Activated T-helper 1 cell treated with anti-CD3 and anti-CD28 coated beads, Interleukin-12 subunit alpha, Interleukin-12 subunit beta, Interleukin-2, Interleukin-4 antibody, amounts not matched to agents 30 ng/mL and 10 ng/mL and 1 ng/mL, durations not matched to agents 14 hours and 24 hours and 36 hours (primary cell): ENCODE measurements at regions of chr5 and their contacts with region 1.

Region 1: DNA sequence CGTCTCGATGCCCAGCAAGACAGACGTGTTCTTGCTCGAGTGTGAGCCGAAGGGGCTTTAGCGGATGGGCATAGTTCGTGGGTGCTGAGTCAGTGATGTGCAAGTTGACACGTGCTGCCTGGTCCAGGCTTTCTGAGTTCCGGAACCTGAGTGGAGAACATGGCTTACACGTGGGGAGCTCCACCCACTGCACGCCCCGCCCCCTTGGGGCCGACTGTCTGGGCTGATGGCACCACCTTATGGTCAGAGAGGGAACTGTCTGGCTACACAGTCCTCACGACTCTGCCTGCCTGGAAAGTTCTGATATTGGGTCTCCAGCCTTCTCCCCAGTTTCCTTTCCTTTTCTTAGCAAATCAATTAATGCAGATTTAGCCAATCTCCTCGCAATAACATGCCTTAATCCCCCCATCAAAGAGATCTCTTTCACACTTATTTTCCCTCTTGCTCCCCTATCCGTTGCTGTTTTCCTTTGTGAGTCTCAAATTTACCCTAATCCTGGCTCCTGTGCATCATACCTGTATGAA is 3.8 kb upstream of the STC2 start:
- DNase-seq: peak; percentile 86
- H3K4me3 Mint-ChIP-seq: peak overlapping the region; percentile 56
- H3K27ac Mint-ChIP-seq: peak overlapping the region; percentile 79
- H3K4me1 Mint-ChIP-seq: peaks cover 35% of the 10 kb centered on the region
- H3K27me3 Mint-ChIP-seq: peaks cover 11% of the 10 kb centered on the region

Region 2: DNA sequence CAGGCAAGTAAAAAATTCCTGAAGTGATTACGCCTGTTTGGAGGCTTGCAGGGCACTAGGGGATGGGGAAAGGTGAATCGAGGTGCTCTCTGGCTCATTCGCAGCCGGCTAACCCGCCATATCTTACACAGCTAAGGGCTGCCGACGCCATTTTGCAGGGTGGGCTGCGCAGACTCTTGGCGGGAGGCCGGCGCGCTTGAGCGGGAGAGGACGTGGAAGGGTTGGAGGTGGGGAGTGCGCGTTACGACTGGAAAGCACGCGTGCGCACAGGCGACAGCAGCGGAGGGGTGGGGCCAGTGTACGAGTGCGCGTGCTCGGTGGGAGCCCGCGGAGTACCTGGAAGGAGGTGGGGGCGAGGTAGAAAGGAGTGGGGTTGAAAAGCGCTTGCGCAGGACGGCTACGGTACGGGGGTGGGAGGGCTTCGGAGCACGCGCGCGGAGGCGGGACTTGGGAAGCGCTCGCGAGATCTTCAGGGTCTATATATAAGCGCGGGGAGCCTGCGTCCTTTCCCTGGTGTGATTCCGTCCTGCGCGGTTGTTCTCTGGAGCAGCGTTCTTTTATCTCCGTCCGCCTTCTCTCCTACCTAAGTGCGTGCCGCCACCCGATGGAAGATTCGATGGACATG is 1944.6 kb before region 1 on chr5 and contains the start of gene NPM1:
- intact Hi-C with region 1: loop called (anchors 5 kb)
- DNase-seq: peak; percentile 97
- H3K4me3 Mint-ChIP-seq: peak within 1 kb of the TSS; percentile 97
- H3K27ac Mint-ChIP-seq: peak within 1 kb of the TSS; percentile 98
- H3K4me1 Mint-ChIP-seq: peaks cover 43% of the 10 kb centered on the region
- H3K27me3 Mint-ChIP-seq: peaks cover 8% of the 10 kb centered on the region
- total RNA-seq, gene NPM1: 2,729 and 2,809 TPM in 2 replicates

Region 3: GRCh38 chr5:172770675-172771438 is 561.2 kb before region 1 on chr5 and contains the start of gene DUSP1:
- intact Hi-C with region 1: loop called (anchors 2 kb)
- DNase-seq: peak; percentile 93
- H3K4me3 Mint-ChIP-seq: peak within 1 kb of the TSS; percentile 88
- H3K27ac Mint-ChIP-seq: peak within 1 kb of the TSS; percentile 98
- H3K4me1 Mint-ChIP-seq: peaks cover 61% of the 10 kb centered on the region
- H3K27me3 Mint-ChIP-seq: no peaks in the 10 kb centered on the region
- total RNA-seq, gene DUSP1: 11.9 and 12.5 TPM in 2 replicates

Region 4: GRCh38 chr5:172984243-172984953 is 347.6 kb before region 1 on chr5:
- intact Hi-C with region 1: loop called (anchors 1 kb)
- DNase-seq: peak; percentile 60
- H3K4me3 Mint-ChIP-seq: peak overlapping the region; percentile 96
- H3K27ac Mint-ChIP-seq: peak overlapping the region; percentile 98
- H3K4me1 Mint-ChIP-seq: peaks cover 16% of the 10 kb centered on the region
- H3K27me3 Mint-ChIP-seq: no peaks in the 10 kb centered on the region

Region 5: GRCh38 chr5:173238312-173239232 is 93.4 kb before region 1 on chr5:
- intact Hi-C with region 1: loop called (anchors 2 kb)
- DNase-seq: no peak
- H3K4me3 Mint-ChIP-seq: peak overlapping the region; percentile 10
- H3K27ac Mint-ChIP-seq: peak overlapping the region; percentile 76
- H3K4me1 Mint-ChIP-seq: peaks cover 20% of the 10 kb centered on the region
- H3K27me3 Mint-ChIP-seq: peaks cover 94% of the 10 kb centered on the region

Region 6: GRCh38 chr5:173315495-173316350 is 16.3 kb before region 1 on chr5:
- intact Hi-C with region 1: loop called (anchors 2 kb)
- DNase-seq: no peak
- H3K4me3 Mint-ChIP-seq: no peak overlapping the region
- H3K27ac Mint-ChIP-seq: no peak overlapping the region
- H3K4me1 Mint-ChIP-seq: no peaks in the 10 kb centered on the region
- H3K27me3 Mint-ChIP-seq: peaks cover 4% of the 10 kb centered on the region

Region 7: GRCh38 chr5:173399851-173400250 is 67.8 kb after region 1 on chr5:
- intact Hi-C with region 1: no loop called
- DNase-seq: no peak
- H3K4me3 Mint-ChIP-seq: no peak overlapping the region
- H3K27ac Mint-ChIP-seq: no peak overlapping the region
- H3K4me1 Mint-ChIP-seq: no peaks in the 10 kb centered on the region
- H3K27me3 Mint-ChIP-seq: peaks cover 3% of the 10 kb centered on the region

Region 8: DNA sequence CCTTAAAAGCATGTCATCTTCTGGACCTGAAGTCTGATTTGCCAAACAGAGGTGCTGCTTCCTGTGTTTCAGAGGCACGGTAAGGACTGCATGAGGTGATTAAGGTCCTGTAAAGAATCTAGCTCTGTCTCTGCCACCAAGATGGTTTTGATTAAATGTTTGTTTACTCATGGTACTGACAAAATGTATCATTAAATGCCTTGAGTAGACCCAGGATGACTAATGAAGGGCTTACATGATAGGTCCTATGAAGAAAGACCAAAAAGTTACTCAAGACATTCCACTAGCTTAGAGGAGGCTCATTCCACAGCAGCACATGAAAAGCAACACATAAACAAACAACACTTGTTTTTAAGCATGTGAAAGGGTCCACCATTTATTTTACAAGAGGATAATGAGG is 183.5 kb after region 1 on chr5:
- intact Hi-C with region 1: no loop called
- DNase-seq: no peak
- H3K4me3 Mint-ChIP-seq: no peak overlapping the region
- H3K27ac Mint-ChIP-seq: no peak overlapping the region
- H3K4me1 Mint-ChIP-seq: no peaks in the 10 kb centered on the region
- H3K27me3 Mint-ChIP-seq: peaks cover 10% of the 10 kb centered on the region

Region 9: GRCh38 chr5:173887610-173888472 is 555.8 kb after region 1 on chr5 and contains the start of gene CPEB4:
- intact Hi-C with region 1: loop called (anchors 1 kb)
- DNase-seq: peak; percentile 96
- H3K4me3 Mint-ChIP-seq: peak within 1 kb of the TSS; percentile 91
- H3K27ac Mint-ChIP-seq: peak within 1 kb of the TSS; percentile 98
- H3K4me1 Mint-ChIP-seq: peaks cover 79% of the 10 kb centered on the region
- H3K27me3 Mint-ChIP-seq: no peaks in the 10 kb centered on the region
- total RNA-seq, gene CPEB4: 9.1 and 14.1 TPM in 2 replicates